Heart right ventricle (tissue), 16 donors: ENCODE measurements at regions of chr1 and their contacts with region 1.

Region 1: GRCh38 chr1:151934048-151934493 is 24.8 kb upstream of the THEM4 start:
- DNase-seq: peak in 1 of 2 donors; percentile 55
- ATAC-seq: peak; percentile 78 to 92 (median 89)
- H3K4me3 ChIP-seq: no peak overlapping the region
- H3K27ac ChIP-seq: no peak overlapping the region
- H3K4me1 ChIP-seq: peaks cover 0 to 4% (median 0%) of the 10 kb centered on the region in 9 donors
- H3K27me3 ChIP-seq: no peaks in the 10 kb centered on the region
- CTCF ChIP-seq: peak; percentile 83 to 96 (median 87)

Region 2: GRCh38 chr1:151881456-151881855 is 52.6 kb before region 1 on chr1:
- intact Hi-C with region 1: no loop called
- DNase-seq: no peak
- ATAC-seq: no peak
- H3K4me3 ChIP-seq: no peak overlapping the region
- H3K27ac ChIP-seq: no peak overlapping the region
- H3K4me1 ChIP-seq: no peaks in the 10 kb centered on the region
- H3K27me3 ChIP-seq: no peaks in the 10 kb centered on the region
- CTCF ChIP-seq: peak in 1 of 9 donors; percentile 18

Region 3: GRCh38 chr1:151961833-151962232 is 27.8 kb after region 1 on chr1:
- intact Hi-C with region 1: loop called in 1 of 10 experiments (anchors 2 kb)
- DNase-seq: no peak
- ATAC-seq: peak in 2 of 8 donors; percentile 13 to 42
- H3K4me3 ChIP-seq: no peak overlapping the region
- H3K27ac ChIP-seq: peak overlapping the region in 3 of 10 donors; percentile 31 to 39 (median 33)
- H3K4me1 ChIP-seq: peaks cover 0 to 41% (median 25%) of the 10 kb centered on the region in 9 donors
- H3K27me3 ChIP-seq: no peaks in the 10 kb centered on the region
- CTCF ChIP-seq: peak in 2 of 9 donors; percentile 13 to 19